ENCODE measurements at regions of chr13 and their contacts with region 1.

Region 1: GRCh38 chr13:69565334-69565733 is 542.3 kb upstream of the ATXN8OS start:
- H3K4me3 ChIP-seq: no peak overlapping the region
- H3K27ac ChIP-seq: no peak overlapping the region
- H3K4me1 ChIP-seq: no peaks in the 10 kb centered on the region
- CTCF ChIP-seq: no peak

Region 2: DNA sequence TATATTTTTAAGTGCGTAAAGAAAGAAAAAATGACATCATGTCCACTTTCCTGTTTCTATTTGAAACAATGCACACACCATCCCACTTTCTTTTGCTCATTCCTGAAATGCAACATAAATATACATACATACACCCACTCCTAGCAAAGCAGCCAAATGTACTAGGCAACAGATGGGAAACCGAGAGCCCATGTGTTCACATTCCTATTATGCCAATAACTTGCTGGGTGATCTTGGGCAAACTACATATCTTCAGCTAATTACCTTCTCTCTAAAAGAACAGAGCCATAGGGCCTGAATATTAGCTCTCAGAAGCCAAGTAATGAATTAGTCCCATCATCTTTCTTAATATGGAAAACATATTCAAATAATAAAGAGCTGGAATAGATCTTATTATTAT is 68.4 kb before region 1 on chr13:
- CTCF ChIA-PET with region 1: no interaction called
- POLR2A ChIA-PET with region 1: no interaction called
- H3K4me3 ChIP-seq: no peak overlapping the region
- H3K27ac ChIP-seq: no peak overlapping the region
- H3K4me1 ChIP-seq: no peaks in the 10 kb centered on the region
- CTCF ChIP-seq: no peak

Region 3: DNA sequence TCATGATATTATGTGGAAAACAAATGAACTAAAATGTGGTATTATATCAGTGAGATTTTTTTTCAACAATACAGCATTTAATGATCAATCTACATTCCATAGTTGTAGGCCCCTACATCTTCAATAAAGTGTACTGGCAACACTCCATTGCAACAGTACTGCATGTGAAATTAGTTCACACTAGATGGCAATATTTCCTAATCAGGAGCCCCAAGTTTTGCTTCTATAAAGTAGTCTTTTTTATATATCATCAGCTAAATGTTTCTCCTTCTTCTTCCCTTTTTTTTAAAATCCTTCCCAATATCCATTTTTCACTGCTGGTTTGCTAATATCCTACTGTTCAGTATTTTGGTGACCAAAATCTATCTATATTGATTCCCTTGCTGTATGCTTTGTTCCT is 14.0 kb after region 1 on chr13:
- CTCF ChIA-PET with region 1: interaction called, 10 read pairs
- POLR2A ChIA-PET with region 1: no interaction called
- H3K4me3 ChIP-seq: no peak overlapping the region
- H3K27ac ChIP-seq: no peak overlapping the region
- H3K4me1 ChIP-seq: no peaks in the 10 kb centered on the region
- CTCF ChIP-seq: no peak

Region 4: DNA sequence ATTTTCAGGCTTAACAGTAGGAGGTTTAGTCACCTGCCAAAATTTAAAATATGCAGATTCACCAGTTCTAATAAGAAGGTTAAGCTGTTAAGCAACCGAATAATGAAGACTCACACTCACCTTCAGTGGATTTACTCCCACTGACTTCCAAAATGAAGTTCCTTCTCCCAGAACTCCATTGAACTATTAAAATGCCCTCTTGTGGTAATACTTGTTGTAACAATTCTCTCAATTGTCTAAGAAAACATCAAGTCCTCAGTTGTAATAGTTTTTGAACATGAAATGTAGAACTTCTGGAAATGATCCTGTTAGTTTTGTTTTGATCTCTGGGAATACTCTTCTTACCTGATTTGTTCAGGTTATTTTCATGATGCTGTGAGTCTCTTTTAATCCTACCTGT is 20.3 kb after region 1 on chr13:
- CTCF ChIA-PET with region 1: interaction called, 10 read pairs
- POLR2A ChIA-PET with region 1: no interaction called
- H3K4me3 ChIP-seq: no peak overlapping the region
- H3K27ac ChIP-seq: no peak overlapping the region
- H3K4me1 ChIP-seq: no peaks in the 10 kb centered on the region
- CTCF ChIP-seq: no peak